Left cardiac atrium (tissue), 4 donors: ENCODE measurements at regions of chr1 and their contacts with region 1.

Region 1: DNA sequence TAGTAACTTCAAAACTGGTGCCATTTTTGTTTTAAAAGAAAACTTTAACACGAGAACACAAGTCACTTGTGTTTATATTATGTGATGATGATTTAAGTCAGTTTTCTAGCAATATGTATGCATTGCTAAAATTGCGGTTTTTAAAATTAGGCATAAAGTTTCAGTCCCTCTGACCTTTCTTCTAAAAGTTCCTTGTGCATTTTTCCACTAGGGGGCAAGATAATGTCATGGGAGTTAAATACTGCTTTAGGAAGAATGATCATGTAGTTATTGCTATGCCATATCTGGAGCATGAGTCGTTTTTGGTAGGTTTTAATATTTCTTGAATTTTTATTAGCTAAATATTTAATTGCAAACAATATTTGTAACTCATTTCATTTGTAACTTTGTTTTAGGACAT is 10.7 kb downstream of the CDC7 start:
- DNase-seq: no peak
- ATAC-seq: peak in 1 of 2 donors; percentile 36

Region 2: DNA sequence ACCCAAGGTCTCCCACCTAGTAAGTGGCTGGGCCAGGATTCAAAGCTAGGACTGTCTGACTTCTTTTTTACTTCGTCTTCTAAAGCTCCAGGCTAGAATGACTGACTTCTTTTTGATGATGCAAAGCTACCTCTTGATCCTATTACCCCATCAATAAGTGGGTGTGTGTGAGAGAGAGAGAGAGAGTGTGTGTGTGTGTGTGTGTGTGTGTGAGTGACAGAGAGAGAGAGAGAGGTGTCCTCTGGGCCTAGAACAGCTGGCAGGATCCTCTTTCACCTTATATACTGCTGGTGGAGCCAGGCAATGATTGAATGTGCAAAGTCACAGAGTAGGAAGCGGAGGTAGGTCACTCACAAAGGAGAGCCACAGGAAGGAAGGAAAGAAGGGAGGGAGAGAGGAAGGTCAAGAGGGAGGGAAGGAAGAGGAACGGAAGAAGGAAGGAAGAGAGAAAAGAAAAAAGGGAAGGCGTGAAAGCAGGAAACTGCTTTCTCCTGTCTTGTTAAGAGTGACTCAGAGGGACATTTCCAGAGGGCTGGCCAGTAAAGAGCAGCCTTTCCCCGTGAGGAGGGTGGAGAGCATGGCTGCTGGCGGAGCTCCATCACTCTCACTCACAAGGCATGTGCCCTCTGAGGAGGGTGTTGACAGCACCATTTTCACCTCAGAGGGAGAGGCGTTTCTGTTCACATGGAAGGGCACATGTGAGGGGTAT is 58.2 kb after region 1 on chr1:
- intact Hi-C with region 1: no loop called
- DNase-seq: peak; percentile 91
- ATAC-seq: peak; percentile 99

Region 3: GRCh38 chr1:91635763-91636162 is 124.4 kb after region 1 on chr1:
- intact Hi-C with region 1: no loop called
- DNase-seq: no peak
- ATAC-seq: no peak

Region 4: DNA sequence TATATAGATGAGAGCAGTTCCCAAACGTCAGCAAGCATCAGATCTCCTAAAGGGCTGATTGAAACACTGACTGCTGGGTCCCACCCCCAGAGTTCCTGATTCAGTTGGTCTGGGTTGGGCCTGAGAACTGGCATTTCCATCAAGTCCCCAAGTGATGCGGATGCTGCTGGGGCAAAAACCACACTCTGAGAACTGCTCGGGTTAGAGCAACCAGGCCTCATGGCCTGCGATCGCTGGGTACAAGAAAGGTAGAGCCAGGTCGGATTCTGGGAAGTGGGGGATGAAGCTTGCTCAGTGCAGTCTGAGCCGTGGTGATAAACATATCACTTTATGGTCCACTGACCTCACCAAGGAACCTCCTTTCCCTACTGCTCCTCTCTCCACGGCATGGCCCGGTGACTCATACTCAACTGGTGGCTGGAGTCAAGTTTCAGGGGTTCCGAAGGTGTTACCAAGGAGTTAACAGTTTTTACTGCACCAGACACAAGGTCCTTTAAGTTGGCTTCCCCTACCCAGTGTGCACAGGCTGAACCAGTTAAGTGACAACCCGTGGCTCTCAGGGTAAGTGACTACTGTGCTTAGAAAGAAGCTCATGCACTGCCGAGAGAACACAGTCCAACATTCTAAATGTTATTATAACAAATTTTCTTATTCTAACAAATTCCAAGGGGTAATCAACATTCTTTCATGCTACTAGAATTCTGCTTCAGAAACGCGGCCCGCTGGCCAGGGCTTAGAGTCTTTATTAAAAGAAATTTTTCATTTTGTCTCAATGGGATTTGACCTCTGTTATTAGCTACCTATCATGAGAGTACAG is 221.1 kb after region 1 on chr1:
- intact Hi-C with region 1: loop called in 1 of 2 experiments (anchors 10 kb)
- DNase-seq: no peak
- ATAC-seq: peak in 1 of 2 donors; percentile 50

Region 5: DNA sequence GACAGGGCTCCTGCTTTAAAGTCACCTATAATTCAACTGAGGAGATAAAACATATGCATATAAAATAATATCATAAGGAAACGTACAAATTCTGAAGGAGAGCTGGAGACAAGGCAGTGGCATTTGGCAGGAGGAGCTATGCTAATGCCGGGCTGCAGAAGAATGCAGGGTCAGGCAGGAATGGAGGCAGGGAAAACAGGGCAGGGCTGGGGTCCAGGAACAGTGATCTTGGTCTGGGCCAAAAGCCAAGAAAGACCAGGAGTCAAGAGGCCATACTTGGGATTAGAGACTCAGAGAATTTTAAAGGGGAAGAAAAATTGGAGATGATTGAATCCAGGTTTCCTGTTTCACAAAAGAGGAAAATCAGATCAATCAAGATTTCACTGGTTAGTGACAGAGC is 417.9 kb after region 1 on chr1:
- intact Hi-C with region 1: loop called (anchors 1 to 5 kb)
- DNase-seq: no peak
- ATAC-seq: peak in 1 of 2 donors; percentile 61